ENCODE measurements at regions of chr22 and their contacts with region 1.

Region 1: DNA sequence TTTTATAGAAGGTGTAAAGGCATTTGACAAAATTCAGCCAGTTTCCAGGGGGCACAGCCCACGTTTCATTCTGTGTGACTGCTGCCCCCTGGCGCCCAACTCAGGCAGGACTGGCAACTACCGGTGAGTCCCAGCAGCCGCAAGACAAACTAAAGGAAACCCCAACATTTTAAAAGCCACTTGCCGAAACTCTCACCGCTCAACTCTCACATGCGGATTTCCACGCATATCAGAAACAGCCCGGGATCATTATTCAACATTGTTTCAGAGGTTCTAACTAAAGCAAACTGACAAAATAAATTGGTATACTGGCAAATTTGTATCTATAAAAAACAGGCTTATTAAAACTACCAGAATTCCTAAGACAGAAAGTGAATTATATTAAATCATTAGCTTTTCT is 48.2 kb downstream of the MORC2 start:
- DNase-seq: no peak
- H3K4me3 ChIP-seq: no peak overlapping the region
- CTCF ChIP-seq: peak; percentile 89

Region 2: DNA sequence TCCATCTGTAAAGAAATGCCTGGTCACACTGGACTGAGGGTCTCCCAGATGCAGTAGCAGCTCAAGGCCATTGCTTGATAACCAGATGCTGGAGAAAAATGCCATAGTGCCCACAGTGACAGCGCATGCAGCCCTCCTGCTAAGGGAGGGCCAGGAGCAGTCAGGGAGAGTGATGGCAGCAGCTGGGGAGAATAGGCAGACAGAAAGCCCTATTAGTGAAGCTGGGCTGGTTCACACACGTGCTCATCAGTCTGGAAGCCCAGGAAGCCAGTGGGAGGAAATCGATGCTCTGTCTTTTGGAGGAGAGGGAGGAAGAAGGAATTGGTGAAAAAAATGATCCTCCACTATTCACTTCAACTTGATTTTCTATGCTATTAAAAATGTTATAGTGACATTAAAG is 142.8 kb before region 1 on chr22:
- CTCF ChIA-PET with region 1: interaction called, 568 read pairs
- POLR2A ChIA-PET with region 1: no interaction called
- DNase-seq: no peak
- H3K4me3 ChIP-seq: no peak overlapping the region
- CTCF ChIP-seq: no peak

Region 3: DNA sequence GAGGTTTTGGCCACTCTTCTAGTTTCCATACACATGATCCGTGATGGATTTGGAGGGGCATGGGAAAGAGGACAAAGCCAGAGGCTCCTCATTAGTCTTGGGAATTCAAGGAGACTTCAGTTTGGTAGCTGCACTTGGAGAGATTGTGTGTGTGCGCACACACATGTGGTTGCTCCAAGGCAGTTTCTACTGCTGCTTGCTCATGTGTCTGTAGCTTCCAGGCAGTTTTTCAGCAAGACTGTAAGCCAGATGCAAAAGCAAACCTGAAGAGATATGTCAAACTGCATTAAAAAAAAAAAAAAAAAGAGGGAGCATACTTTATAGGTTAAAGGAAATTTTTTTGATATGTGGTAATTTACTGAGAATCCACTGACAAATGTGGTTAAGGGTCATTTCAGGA is 130.0 kb before region 1 on chr22:
- CTCF ChIA-PET with region 1: interaction called, 12 read pairs
- POLR2A ChIA-PET with region 1: no interaction called
- DNase-seq: no peak
- H3K4me3 ChIP-seq: no peak overlapping the region
- CTCF ChIP-seq: no peak

Region 4: DNA sequence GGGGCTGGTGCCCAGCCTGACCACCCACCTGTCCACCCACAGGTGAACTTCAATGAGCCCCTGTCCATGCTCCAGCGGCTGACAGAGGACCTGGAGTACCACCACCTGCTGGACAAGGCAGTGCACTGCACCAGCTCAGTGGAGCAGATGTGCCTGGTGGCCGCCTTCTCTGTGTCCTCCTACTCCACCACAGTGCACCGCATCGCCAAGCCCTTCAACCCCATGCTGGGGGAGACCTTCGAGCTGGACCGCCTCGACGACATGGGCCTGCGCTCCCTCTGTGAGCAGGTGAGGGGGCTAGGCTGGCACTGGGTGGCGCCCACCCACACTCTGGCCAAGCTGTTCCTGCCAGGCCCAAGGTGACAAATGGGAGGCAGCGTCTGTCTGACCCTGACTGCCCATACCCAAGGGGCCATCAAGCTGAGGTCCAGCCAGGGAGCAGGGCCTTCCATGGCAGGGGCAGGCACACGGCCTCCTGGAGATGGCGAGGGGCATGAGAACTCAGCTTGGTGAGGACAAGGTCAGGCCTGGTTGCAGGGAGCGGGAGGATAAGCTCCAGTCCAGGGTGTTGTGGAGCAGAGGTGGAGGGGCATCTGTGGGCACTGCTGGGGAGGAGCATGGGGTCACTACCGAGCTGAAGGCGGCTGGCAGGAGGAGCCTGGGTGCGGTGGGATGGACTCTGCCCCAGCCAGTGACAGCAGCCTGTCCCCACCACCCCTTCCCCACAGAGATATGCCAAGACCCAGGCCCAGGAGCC is 29.5 kb before region 1 on chr22:
- CTCF ChIA-PET with region 1: interaction called, 30 read pairs
- POLR2A ChIA-PET with region 1: no interaction called
- DNase-seq: no peak
- H3K4me3 ChIP-seq: no peak overlapping the region
- CTCF ChIP-seq: peak; percentile 84

Region 5: GRCh38 chr22:30931541-30932300 is 11.3 kb after region 1 on chr22:
- CTCF ChIA-PET with region 1: interaction called, 46 read pairs
- POLR2A ChIA-PET with region 1: interaction called, 3 read pairs
- DNase-seq: no peak
- H3K4me3 ChIP-seq: no peak overlapping the region
- CTCF ChIP-seq: no peak

Region 6: GRCh38 chr22:30947816-30948454 is 27.5 kb after region 1 on chr22:
- CTCF ChIA-PET with region 1: interaction called, 18 read pairs
- POLR2A ChIA-PET with region 1: no interaction called
- DNase-seq: peak; percentile 16
- H3K4me3 ChIP-seq: no peak overlapping the region
- CTCF ChIP-seq: peak; percentile 40